Dendritic cell treated with granulocyte-macrophage colony-stimulating factor and Interleukin-4, amounts not matched to agents 40 ng/mL and 50 ng/mL, for 4 days (primary cell): ENCODE measurements at regions of chr6 and their contacts with region 1.

Region 1: DNA sequence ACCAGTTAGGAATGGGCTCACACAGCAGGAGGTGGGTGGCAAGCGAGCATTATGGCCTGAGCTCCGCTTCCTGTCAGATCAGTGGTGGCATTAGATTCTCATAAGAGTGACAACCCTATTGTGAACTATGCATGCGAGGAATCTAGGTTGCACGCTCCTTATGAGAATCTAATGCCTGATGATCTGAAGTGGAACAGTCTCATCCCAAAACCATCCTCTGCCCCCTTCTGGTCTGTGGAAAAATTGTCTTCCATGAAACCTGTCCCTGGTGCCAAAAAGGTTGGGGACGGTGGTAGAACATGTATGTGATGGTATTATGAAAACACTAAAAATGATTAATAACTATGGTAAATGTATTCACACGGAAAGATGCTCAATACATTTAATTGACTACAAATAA is 99.7 kb upstream of the HIVEP1 start:
- H3K4me3 Mint-ChIP-seq: no peak overlapping the region
- H3K27ac Mint-ChIP-seq: no peak overlapping the region
- H3K4me1 Mint-ChIP-seq: no peaks in the 10 kb centered on the region
- H3K27me3 Mint-ChIP-seq: no peaks in the 10 kb centered on the region

Region 2: GRCh38 chr6:11699576-11699975 is 212.8 kb before region 1 on chr6:
- intact Hi-C with region 1: loop called (anchors 5 kb)
- H3K4me3 Mint-ChIP-seq: no peak overlapping the region
- H3K27ac Mint-ChIP-seq: no peak overlapping the region
- H3K4me1 Mint-ChIP-seq: peaks cover 18% of the 10 kb centered on the region
- H3K27me3 Mint-ChIP-seq: no peaks in the 10 kb centered on the region

Region 3: GRCh38 chr6:12196326-12196936 is 284.0 kb after region 1 on chr6:
- intact Hi-C with region 1: no loop called
- H3K4me3 Mint-ChIP-seq: no peak overlapping the region
- H3K27ac Mint-ChIP-seq: no peak overlapping the region
- H3K4me1 Mint-ChIP-seq: peaks cover 10% of the 10 kb centered on the region
- H3K27me3 Mint-ChIP-seq: no peaks in the 10 kb centered on the region